AG04449 (cell line): ENCODE measurements at regions of chr2 and their contacts with region 1.

Region 1: DNA sequence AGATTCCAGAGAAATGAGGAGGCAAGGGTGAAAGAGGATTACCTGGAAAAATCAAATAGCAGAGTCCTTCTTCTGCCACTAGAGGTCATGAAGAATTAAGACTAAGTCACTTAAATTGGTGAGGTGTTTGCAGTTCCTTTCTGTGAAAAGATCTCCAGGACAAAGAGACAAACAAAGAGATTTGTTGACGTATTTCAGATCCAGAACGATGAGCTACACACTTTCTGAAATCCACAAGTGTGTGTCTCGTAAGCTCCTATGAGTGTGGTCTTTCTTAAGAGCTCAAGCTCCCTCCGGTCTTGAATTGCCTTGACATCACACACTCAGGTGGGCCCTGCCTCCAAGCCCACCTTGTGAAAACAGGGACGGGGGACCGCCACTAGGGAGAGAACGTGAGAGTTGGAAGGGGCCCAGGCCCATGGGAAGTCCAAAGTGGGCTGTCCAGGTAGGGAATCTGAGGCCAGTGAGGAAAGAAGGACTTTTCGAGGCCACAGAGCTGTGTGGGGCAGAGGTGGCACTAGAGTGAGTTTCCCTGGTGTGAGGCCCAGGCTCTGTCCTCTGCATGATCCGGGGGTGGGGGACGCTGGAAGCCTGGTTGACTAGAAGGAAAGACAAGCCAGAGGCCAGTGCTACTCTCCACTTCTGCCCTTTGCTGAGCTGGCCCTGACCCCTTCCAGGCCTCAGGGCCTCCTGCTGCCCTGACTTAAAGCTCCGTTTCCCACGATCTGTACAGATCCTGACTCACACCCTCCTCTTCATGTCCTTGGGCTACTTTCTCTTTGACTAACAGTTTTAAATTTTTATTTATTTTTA is 168.1 kb upstream of the NCK2 start:
- DNase-seq: peak; percentile 12
- H3K4me3 ChIP-seq: no peak overlapping the region
- CTCF ChIP-seq: peak; percentile 43

Region 2: DNA sequence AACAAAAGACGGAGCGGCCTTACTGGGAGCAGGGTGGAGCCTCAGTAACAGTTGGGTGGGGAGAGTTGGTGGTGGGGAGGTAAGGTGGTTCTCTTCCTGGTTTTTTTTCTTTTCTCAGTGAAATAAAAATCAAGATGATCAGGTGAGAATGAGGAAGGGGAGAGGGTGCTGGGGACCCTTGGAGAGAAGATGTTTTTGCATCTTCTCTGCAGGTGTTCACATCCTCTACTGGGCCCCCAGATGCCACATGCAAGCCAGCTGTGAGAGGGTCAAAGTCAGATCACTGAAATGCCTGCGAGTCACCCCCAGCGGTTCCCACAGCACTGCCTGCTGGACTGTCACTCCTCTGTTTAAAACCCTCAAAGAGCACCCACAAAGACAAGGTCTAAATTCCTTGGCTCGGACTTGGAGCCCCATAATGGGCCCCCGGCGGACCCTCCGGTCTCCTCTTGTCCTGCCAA is 108.0 kb before region 1 on chr2:
- CTCF ChIA-PET with region 1: no interaction called
- POLR2A ChIA-PET with region 1: no interaction called
- DNase-seq: no peak
- H3K4me3 ChIP-seq: no peak overlapping the region
- CTCF ChIP-seq: no peak

Region 3: GRCh38 chr2:105563000-105563719 is 13.5 kb before region 1 on chr2:
- CTCF ChIA-PET with region 1: interaction called, 10 read pairs
- POLR2A ChIA-PET with region 1: no interaction called
- DNase-seq: no peak
- H3K4me3 ChIP-seq: no peak overlapping the region
- CTCF ChIP-seq: no peak

Region 4: DNA sequence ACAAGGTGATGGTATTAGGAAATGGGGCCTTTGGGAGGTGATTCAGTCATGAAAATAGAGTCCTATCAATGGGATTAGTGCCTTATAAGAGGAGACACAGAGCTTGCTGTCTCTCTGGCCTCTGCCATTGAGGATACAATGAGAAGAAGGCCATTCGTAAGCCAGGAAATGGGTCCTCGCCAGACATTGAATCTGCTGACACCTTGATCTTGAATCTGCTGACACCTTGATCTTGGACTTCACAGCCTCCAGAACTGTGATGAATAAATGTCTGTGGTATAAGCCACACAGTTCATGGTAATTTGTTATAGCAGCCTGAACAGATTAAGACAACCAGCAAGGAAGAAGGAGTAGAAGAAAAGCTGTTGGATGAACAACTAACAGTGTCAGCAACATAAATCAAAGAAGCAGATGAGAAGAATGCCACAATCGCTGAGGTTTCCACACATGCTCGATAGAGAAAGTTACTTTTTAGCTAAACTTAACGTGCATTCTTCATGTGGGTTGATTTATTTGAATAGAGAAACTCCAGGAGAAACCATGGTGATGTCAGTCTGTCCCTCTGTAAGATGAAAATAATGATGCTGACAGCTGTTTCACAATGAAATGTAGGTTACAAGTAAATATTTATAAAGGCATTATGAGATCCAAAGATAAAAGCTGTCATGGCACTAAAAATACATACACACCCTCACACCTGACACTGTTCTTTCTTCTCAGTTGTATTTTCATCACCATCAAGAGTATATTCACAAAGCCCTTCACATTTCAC is 14.3 kb after region 1 on chr2:
- CTCF ChIA-PET with region 1: interaction called, 18 read pairs
- POLR2A ChIA-PET with region 1: no interaction called
- DNase-seq: no peak
- H3K4me3 ChIP-seq: no peak overlapping the region
- CTCF ChIP-seq: no peak

Region 5: GRCh38 chr2:106085181-106085940 is 508.7 kb after region 1 on chr2:
- CTCF ChIA-PET with region 1: interaction called, 14 read pairs
- POLR2A ChIA-PET with region 1: no interaction called
- DNase-seq: no peak
- H3K4me3 ChIP-seq: no peak overlapping the region
- CTCF ChIP-seq: peak; percentile 24